GM13977 (cell line): ENCODE measurements at regions of chr1 and their contacts with region 1.

Region 1: GRCh38 chr1:241531195-241532161 is 700 bp upstream of the KMO start:
- DNase-seq: no peak
- CTCF ChIP-seq: peak; percentile 44

Region 2: GRCh38 chr1:241579426-241579825 is 47.9 kb after region 1 on chr1:
- in situ Hi-C with region 1: no loop called
- DNase-seq: no peak
- CTCF ChIP-seq: no peak

Region 3: DNA sequence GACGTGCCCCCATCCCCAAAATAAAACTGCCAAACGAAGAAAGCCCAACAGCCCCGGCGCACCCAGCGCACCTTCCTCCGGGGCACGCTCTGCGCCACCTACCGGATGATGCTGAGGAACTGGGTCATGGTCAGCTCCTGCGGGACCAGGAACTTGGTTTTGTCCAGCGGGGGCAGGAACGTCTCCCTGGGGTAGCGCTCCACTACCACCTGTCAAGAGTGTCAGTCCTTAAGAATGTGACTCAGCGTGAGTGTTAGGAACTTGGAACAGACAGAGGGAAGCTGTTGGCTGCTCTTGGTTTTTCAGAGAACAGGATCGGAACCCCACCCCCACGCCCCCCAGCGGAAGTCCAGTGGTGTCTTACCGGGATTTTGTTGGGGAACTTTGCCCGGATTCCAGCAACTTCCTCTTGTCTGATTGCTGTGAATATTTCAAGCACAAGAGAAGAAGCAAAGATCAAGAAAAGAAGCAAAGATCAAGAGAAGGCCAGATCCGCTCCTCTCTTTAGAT is 467.0 kb after region 1 on chr1:
- in situ Hi-C with region 1: loop called (anchors 25 kb)
- DNase-seq: peak; percentile 61
- CTCF ChIP-seq: peak; percentile 81